HCT116 (cell line): ENCODE measurements at regions of chr7 and their contacts with region 1.

Region 1: GRCh38 chr7:100965723-100966541 is 3.4 kb upstream of the MUC12 start:
- DNase-seq: peak; percentile 91
- ATAC-seq: peak; percentile 91
- H3K4me3 ChIP-seq: peak overlapping the region; percentile 58 to 63
- H3K27ac ChIP-seq: peak overlapping the region; percentile 61; the same call in 1 of the 2 replicates
- H3K4me1 ChIP-seq: peaks cover 6 to 23% of the 10 kb centered on the region in 2 experiments; a peak in 3 of 4 replicates
- H3K27me3 ChIP-seq: peaks cover 25% of the 10 kb centered on the region; the same call in 1 of the 2 replicates
- CTCF ChIP-seq: peak in 2 of 3 experiments; percentile 97 to 99; a peak in 4 of 6 replicates
- POLR2A ChIP-seq: no peak
- RAD21 ChIP-seq: no peak

Region 2: DNA sequence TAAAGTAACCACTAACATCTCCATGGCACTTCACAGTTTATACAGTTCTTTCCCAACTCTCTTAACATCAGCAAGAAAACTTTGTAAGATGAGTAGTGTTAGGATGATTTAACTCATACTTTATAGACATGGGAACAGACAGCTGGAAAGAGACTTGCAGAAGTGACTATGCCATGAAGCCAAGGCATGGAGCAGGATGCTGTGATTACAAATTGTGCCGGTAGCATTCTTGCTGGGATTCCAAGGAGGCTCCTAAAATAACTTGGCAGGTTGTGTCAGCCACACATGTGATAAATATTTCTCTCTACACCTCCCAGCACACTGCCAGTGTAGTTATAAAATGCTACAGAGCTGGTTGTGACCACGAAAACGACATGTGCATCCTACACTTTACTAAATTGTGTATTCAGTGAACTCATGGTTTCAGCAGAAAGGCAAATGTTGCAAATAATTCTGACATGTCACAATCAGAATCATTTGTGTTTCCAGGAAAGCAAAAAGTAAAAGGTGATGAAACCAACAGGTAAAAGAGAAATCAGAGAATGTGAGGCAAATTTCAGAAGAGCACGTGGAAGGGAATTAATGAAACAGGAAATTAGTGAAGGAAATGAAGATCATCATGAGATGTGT is 1176.4 kb before region 1 on chr7:
- CTCF ChIA-PET with region 1: no interaction called
- POLR2A ChIA-PET with region 1: no interaction called
- RAD21 ChIA-PET with region 1: no interaction called
- intact Hi-C with region 1: no loop called
- DNase-seq: no peak
- ATAC-seq: no peak
- H3K4me3 ChIP-seq: no peak overlapping the region
- H3K27ac ChIP-seq: no peak overlapping the region
- H3K4me1 ChIP-seq: no peaks in the 10 kb centered on the region
- H3K27me3 ChIP-seq: peaks cover 12% of the 10 kb centered on the region
- CTCF ChIP-seq: no peak
- POLR2A ChIP-seq: no peak
- RAD21 ChIP-seq: no peak

Region 3: GRCh38 chr7:100563809-100564400 is 402.0 kb before region 1 on chr7:
- CTCF ChIA-PET with region 1: no interaction called
- POLR2A ChIA-PET with region 1: no interaction called
- RAD21 ChIA-PET with region 1: no interaction called
- intact Hi-C with region 1: no loop called
- DNase-seq: no peak
- ATAC-seq: peak; percentile 80
- H3K4me3 ChIP-seq: no peak overlapping the region
- H3K27ac ChIP-seq: no peak overlapping the region
- H3K4me1 ChIP-seq: peaks cover 0 to 20% of the 10 kb centered on the region in 2 experiments; a peak in 1 of 4 replicates
- H3K27me3 ChIP-seq: no peaks in the 10 kb centered on the region
- CTCF ChIP-seq: peak; percentile 81 to 99 (median 93)
- POLR2A ChIP-seq: no peak
- RAD21 ChIP-seq: peak; percentile 83

Region 4: GRCh38 chr7:101059627-101059942 is 93.7 kb after region 1 on chr7:
- CTCF ChIA-PET with region 1: no interaction called
- POLR2A ChIA-PET with region 1: no interaction called
- RAD21 ChIA-PET with region 1: interaction called in 1 of 2 experiments, 3 read pairs
- intact Hi-C with region 1: loop called (anchors 1 kb)
- DNase-seq: no peak
- ATAC-seq: peak; percentile 22; the same call in 1 of the 2 replicates
- H3K4me3 ChIP-seq: no peak overlapping the region
- H3K27ac ChIP-seq: no peak overlapping the region
- H3K4me1 ChIP-seq: no peaks in the 10 kb centered on the region; a peak in 1 of 4 replicates
- H3K27me3 ChIP-seq: peaks cover 30% of the 10 kb centered on the region
- CTCF ChIP-seq: no peak
- POLR2A ChIP-seq: no peak
- RAD21 ChIP-seq: no peak

Region 5: DNA sequence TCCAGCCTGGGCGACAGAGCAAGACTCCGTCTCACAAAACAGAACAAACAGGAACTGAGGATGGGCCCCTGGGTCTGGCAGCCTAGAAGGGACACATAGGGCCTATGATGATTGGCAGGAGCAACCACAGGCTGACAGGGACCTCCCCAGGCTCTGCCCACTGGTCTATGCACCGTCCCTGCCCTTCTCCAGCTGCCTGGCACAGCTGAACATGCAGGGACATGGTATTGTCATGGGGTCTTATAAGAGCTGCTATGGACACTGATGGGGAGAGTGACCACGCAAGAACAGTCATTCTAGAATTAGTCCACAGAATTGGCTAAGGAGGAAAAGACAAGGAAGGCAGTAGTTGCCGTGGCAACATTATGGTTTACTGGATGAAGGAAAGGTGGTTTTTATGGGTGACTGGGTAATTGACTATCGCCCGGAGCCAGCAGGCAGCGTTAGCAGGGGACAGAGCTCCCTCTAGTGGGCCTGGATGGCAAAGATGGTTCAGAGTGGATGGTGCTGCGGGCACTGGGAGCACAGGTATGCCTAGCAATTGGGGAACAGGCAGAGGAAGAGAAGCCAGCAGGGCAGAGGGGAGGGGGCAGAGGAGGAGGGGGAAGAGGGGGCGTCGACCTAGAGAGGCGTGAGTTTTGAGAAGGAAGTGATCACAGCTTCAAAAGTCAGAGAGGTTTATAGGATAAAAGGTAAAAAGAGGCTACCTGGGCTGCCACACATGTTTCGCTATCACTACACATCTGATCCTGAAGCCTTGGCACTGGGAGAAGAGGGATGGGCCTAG is 111.6 kb after region 1 on chr7:
- CTCF ChIA-PET with region 1: no interaction called
- POLR2A ChIA-PET with region 1: no interaction called
- RAD21 ChIA-PET with region 1: no interaction called
- intact Hi-C with region 1: loop called (anchors 5 kb)
- DNase-seq: peak; percentile 68
- ATAC-seq: peak; percentile 98
- H3K4me3 ChIP-seq: no peak overlapping the region
- H3K27ac ChIP-seq: no peak overlapping the region
- H3K4me1 ChIP-seq: peaks cover 0 to 10% of the 10 kb centered on the region in 2 experiments; a peak in 2 of 4 replicates
- H3K27me3 ChIP-seq: no peaks in the 10 kb centered on the region
- CTCF ChIP-seq: peak; percentile 88 to 96 (median 95)
- POLR2A ChIP-seq: no peak
- RAD21 ChIP-seq: peak; percentile 94

Region 6: DNA sequence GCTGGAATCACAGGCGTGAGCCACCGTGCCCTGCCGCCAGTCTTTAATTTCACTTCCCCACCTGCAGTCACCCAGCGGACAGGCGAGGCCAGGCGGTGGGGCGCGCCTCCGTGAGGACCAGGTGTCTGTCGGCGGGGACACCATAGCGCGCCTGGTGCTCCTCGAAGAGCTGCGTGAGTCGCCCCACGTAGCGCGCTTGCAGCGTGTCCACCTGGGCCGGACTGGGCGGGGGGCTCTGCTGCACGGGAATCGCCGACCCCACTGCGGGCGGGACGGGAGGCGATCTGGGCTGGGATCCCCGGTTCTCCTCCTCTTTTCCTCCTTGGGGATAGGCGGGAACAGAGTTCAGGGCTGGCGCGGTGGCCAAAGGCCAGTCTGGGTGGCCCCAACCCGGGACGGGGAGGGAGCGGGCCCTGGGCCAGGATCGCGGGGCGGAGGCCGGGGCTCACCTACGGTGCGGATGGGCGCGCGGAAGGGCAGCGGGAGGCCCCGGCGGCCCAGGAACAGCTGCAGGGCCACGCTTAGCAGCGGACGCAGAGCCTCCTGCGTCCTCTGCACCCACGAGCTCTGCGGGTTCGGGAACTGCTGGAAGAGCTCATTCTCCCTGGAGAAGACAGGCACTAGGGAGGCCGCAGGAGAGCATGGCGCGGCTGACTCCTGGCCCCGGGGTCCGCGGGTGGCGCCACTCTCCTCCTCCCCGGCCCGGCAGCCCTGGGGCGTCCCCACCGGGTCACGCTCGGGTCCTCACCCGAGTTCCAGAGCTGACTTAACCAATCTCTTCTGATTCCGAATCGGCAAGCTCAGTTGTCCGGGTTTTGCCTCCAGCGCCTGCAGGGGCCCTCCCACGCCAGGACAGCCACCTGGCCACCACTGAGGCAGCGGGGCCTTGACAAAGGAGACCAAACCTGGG is 236.0 kb after region 1 on chr7:
- CTCF ChIA-PET with region 1: no interaction called
- POLR2A ChIA-PET with region 1: no interaction called
- RAD21 ChIA-PET with region 1: no interaction called
- intact Hi-C with region 1: loop called (anchors 10 kb)
- DNase-seq: no peak
- ATAC-seq: no peak
- H3K4me3 ChIP-seq: no peak overlapping the region
- H3K27ac ChIP-seq: no peak overlapping the region
- H3K4me1 ChIP-seq: peaks cover 0 to 8% of the 10 kb centered on the region in 2 experiments; a peak in 3 of 4 replicates
- H3K27me3 ChIP-seq: no peaks in the 10 kb centered on the region
- CTCF ChIP-seq: no peak
- POLR2A ChIP-seq: no peak
- RAD21 ChIP-seq: no peak

Region 7: DNA sequence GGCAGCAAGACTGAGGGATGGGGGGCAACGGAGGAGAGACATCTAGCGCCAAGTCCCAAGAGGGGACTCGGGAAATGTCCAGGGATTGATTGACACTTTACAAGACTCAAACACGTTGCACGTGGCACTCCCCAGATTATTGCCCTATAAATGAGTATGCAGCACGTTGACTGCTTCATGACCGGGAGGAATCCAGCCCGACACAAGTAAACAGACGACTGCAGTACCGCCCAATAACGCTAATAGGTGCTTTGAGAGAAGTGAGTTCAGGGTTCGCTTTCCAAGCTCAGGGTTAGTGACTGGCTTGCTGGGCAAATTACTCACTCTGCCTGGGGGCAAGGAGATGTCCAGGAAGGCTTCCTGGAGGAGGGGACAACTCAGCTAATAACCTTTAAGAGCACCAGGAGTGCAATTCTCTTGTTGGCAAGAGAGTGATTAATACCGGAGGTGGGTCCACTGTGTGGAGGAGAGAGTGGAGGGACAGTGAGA is 736.5 kb after region 1 on chr7:
- CTCF ChIA-PET with region 1: no interaction called
- POLR2A ChIA-PET with region 1: no interaction called
- RAD21 ChIA-PET with region 1: no interaction called
- intact Hi-C with region 1: no loop called
- DNase-seq: peak; percentile 23
- ATAC-seq: peak; percentile 89
- H3K4me3 ChIP-seq: no peak overlapping the region
- H3K27ac ChIP-seq: no peak overlapping the region
- H3K4me1 ChIP-seq: peaks cover 0 to 7% of the 10 kb centered on the region in 2 experiments; a peak in 2 of 4 replicates
- H3K27me3 ChIP-seq: no peaks in the 10 kb centered on the region
- CTCF ChIP-seq: peak in 2 of 3 experiments; percentile 19 to 30; a peak in 3 of 6 replicates
- POLR2A ChIP-seq: no peak
- RAD21 ChIP-seq: no peak; the same call in 1 of the 2 replicates